Colonic mucosa (tissue), 4 donors: ENCODE measurements at regions of chr22 and their contacts with region 1.

Region 1: DNA sequence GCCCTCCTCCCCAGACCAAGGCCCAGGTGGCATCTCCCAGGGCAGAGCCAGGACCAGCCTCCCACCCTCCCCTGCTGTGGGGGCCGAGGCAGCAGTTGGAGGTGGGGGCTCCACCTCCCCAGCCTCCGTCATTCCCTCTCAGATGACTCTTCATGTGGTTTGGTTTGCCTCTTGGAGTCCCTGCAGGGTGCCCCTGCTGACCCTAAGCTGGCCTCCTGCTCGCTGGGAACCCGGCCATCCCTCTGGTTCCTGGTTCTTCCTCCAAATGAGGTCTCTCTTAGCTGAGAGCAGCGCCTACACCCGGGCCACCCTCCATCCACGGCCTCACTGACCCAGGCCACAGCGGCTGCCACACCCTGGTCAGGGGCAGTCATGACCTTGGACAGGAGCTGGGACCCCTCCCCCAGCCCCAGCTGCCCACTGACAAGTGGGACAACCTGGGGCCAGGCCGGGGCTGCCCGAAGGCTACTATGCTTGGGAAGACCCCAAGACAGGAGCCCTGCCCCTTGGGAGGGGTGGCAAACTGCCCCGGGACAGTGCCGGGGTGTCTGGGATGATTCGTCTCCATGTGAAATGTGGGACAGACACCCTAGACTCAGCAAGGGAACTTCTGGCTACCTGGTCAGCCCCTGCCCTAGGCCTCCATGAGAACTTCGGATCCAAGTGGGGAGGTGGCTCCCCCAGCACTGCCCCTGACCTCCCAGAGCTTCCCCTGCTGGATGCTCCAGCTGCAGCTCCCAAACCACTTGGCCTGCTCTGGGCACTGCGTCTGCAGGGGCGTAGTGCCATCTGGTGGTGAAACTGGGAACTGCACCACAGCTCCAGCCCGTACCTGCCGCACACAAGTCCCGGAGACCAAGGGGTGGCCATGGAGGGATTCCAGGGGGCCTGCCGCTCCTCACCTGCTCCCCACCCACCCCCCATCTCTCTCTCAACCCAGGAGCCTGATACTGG is 194.5 kb downstream of the IGLL1 start:
- DNase-seq: peak; percentile 85
- H3K4me3 ChIP-seq: no peak overlapping the region
- H3K27ac ChIP-seq: no peak overlapping the region
- H3K4me1 ChIP-seq: no peaks in the 10 kb centered on the region
- H3K27me3 ChIP-seq: no peaks in the 10 kb centered on the region
- CTCF ChIP-seq: peak; percentile 98

Region 2: GRCh38 chr22:23128269-23129108 is 257.1 kb before region 1 on chr22:
- intact Hi-C with region 1: loop called (anchors 10 kb)
- DNase-seq: peak; percentile 78
- H3K4me3 ChIP-seq: no peak overlapping the region
- H3K27ac ChIP-seq: no peak overlapping the region
- H3K4me1 ChIP-seq: no peaks in the 10 kb centered on the region
- H3K27me3 ChIP-seq: no peaks in the 10 kb centered on the region
- CTCF ChIP-seq: peak; percentile 82

Region 3: DNA sequence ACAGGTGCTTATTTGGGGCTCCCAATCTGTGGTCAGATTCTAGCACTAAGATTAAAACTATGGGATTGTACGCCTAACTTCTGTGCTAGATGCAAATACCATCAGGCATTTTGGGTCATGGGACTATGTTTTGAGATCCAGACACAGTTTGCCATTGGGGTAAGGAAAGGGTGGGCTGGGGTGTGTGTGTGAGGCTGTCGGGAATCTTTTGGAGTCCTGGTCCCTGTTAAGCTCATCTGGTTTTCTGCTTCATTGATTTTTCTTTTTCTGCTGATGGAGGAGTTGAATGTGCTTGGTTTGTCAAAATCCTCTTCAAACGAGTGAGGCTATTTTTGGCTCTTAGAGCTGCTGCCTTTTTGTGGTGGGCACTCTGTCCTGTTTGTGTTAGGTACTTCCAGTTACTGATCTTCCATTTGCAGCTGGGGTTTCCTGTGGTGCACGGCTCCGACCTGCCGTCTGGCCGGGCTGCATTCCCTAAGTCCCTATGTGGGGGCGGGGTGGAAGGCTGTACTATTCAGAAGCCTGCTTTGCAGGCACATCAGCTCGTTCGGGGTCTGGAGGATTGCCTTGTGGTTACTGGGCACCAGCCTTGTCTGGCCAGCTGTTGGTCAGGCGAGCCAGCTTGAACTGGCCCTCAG is 202.4 kb before region 1 on chr22:
- intact Hi-C with region 1: no loop called
- DNase-seq: peak; percentile 62
- H3K4me3 ChIP-seq: peak overlapping the region; percentile 64
- H3K27ac ChIP-seq: no peak overlapping the region
- H3K4me1 ChIP-seq: peaks cover 23% of the 10 kb centered on the region
- H3K27me3 ChIP-seq: no peaks in the 10 kb centered on the region
- CTCF ChIP-seq: no peak

Region 4: DNA sequence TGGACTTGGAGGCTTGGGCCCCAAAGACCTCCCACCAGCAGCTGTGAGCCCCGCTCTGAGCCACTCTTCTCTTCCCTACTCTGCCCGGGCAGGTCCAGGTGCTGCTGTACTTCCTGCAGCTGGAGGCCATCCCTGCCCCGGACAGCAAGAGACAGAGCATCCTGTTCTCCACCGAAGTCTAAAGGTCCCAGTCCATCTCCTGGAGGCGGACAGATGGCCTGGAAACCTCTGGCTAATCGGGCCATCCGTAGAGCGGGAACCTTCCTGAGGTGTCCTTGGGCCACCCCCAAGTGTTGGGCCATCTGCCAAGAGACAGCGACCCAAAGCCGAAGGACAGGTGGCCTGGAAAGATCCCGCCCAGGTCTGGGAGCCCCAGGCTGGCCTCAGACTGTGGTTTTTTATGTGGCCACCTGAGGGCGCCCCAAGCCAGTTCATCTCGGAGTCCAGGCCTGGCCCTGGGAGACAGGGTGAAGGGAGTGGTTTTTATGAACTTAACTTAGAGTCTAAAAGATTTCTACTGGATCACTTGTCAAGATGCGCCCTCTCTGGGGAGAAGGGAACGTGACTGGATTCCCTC is 70.1 kb before region 1 on chr22:
- intact Hi-C with region 1: loop called (anchors 2 kb)
- DNase-seq: peak; percentile 60
- H3K4me3 ChIP-seq: no peak overlapping the region
- H3K27ac ChIP-seq: no peak overlapping the region
- H3K4me1 ChIP-seq: no peaks in the 10 kb centered on the region
- H3K27me3 ChIP-seq: no peaks in the 10 kb centered on the region
- CTCF ChIP-seq: peak; percentile 91

Region 5: DNA sequence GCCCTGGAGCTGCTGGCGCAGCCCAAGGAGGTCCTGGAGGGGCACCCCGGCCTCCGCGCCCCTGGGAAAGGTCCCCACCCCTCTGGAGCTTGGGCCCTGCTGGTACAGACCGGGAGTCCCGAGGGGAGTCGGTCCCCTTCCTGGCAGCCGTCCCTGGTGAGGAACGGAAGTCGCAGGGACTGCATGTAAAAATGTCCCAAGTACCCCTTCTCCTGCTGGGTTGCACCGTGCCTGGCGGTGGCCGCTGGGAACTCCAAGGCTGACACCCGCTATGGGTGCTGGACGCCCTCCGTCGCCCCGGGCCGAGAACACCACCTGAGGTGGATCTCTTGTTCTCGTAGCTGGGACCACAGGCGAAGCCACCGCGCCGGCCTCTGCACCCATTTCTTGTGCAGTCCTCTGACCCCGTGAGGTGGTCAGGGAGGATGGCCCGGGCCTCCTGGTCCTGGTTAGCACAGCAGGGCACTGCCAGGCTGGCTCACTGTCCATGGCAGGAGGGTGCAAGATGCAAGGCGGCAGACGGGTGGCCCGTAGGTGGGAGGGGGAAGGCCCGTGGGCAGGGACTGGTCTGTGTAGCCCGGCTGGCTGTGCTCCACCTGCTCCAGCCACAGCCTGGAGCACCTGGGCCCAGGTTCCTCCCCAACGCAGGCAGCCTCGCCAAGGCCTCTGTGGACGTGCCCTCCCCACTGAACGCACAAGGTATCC is 29.3 kb after region 1 on chr22:
- intact Hi-C with region 1: no loop called
- DNase-seq: no peak
- H3K4me3 ChIP-seq: no peak overlapping the region
- H3K27ac ChIP-seq: no peak overlapping the region
- H3K4me1 ChIP-seq: no peaks in the 10 kb centered on the region
- H3K27me3 ChIP-seq: no peaks in the 10 kb centered on the region
- CTCF ChIP-seq: no peak

Region 6: DNA sequence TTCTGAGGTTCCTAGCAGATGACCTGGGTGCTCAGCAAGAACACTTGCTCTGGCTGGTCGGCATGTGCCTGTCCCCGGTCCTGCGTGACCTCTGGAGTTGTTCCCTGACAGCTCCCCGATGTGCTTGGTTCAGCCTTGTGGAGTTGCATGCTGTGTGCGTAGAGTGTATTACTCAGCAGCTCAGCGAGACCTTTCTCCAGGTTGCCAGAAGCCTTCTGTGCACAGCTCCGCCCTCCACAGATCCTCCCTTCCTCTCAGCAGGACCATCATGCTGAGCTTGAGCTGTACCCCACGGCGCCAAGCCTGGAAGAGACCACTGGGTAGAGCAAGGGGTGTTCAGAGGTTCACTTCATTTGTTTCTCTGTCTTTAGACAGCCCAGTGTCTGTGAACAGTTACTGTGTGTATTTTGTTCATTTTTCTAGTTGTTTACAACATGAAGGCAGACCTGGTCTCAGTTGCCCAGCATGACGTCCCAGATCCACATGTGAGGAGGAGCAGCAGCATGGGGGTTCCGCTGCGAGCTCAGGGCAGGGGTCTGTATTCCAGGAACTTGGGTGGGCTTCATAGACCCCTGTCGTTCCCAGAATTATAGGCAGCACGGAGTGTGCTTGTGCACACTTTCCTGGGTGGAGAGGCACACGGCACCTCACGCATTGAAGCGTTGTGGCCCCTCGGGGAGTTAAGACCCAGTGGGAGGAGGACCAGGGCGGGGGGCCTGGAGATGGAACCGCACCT is 45.9 kb after region 1 on chr22:
- intact Hi-C with region 1: no loop called
- DNase-seq: no peak
- H3K4me3 ChIP-seq: no peak overlapping the region
- H3K27ac ChIP-seq: no peak overlapping the region
- H3K4me1 ChIP-seq: no peaks in the 10 kb centered on the region
- H3K27me3 ChIP-seq: no peaks in the 10 kb centered on the region
- CTCF ChIP-seq: no peak